ENCODE measurements at regions of chr14 and their contacts with region 1.

Region 1: DNA sequence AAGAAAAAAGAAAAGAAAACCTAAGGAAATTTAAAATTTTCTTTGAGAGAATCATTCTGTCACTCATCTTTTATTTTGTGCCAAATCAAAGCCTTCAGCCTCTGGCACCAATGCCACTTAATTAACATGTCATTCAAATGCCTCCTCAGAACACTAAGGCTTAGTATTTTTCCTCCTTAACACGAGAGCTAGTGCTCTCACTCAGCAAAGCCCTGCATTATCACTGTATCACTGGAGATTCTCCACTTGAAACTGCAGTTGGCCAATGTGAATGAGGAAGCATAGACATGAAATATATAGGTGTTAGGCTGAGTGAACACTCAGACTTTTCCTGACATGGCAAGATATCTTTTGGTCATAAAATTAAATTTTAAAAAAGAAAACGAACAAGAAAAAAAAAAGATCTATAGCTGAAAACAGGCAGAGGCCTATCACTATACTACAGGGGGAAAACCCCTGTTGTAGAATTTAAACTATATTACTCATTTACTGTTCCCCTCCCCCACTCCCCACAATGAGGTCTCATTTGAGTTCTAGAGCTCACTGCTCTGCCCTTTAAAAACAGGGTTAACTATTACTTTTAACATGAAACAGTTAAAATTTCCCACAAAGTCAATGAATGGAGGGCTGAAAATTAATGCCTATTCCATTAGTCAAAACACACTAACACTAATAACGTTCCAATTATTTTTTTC is 5.1 kb downstream of the MBIP start:
- DNase-seq: no peak
- ATAC-seq: no peak
- H3K4me3 ChIP-seq: no peak overlapping the region
- H3K27ac ChIP-seq: no peak overlapping the region
- H3K4me1 ChIP-seq: peaks cover 25 to 36% of the 10 kb centered on the region in 2 experiments
- H3K27me3 ChIP-seq: no peaks in the 10 kb centered on the region
- CTCF ChIP-seq: no peak
- POLR2A ChIP-seq: no peak
- RAD21 ChIP-seq: no peak

Region 2: GRCh38 chr14:35883677-35884293 is 431.5 kb before region 1 on chr14:
- CTCF ChIA-PET with region 1: no interaction called
- POLR2A ChIA-PET with region 1: no interaction called
- RAD21 ChIA-PET with region 1: no interaction called
- intact Hi-C with region 1: loop called (anchors 10 kb)
- DNase-seq: no peak
- ATAC-seq: peak; percentile 70
- H3K4me3 ChIP-seq: no peak overlapping the region
- H3K27ac ChIP-seq: no peak overlapping the region
- H3K4me1 ChIP-seq: peaks cover 5 to 6% of the 10 kb centered on the region in 2 experiments
- H3K27me3 ChIP-seq: no peaks in the 10 kb centered on the region
- CTCF ChIP-seq: peak; percentile 46 to 84 (median 76); a peak in 5 of 6 replicates
- POLR2A ChIP-seq: no peak
- RAD21 ChIP-seq: peak; percentile 56

Region 3: GRCh38 chr14:36373982-36374673 is 58.8 kb after region 1 on chr14:
- CTCF ChIA-PET with region 1: no interaction called
- POLR2A ChIA-PET with region 1: no interaction called
- RAD21 ChIA-PET with region 1: no interaction called
- intact Hi-C with region 1: no loop called
- DNase-seq: peak; percentile 82
- ATAC-seq: peak; percentile 100
- H3K4me3 ChIP-seq: no peak overlapping the region
- H3K27ac ChIP-seq: no peak overlapping the region
- H3K4me1 ChIP-seq: no peaks in the 10 kb centered on the region
- H3K27me3 ChIP-seq: no peaks in the 10 kb centered on the region
- CTCF ChIP-seq: peak; percentile 73 to 93 (median 90)
- POLR2A ChIP-seq: no peak
- RAD21 ChIP-seq: peak; percentile 76